ENCODE measurements at regions of chr4 and their contacts with region 1.

Region 1: DNA sequence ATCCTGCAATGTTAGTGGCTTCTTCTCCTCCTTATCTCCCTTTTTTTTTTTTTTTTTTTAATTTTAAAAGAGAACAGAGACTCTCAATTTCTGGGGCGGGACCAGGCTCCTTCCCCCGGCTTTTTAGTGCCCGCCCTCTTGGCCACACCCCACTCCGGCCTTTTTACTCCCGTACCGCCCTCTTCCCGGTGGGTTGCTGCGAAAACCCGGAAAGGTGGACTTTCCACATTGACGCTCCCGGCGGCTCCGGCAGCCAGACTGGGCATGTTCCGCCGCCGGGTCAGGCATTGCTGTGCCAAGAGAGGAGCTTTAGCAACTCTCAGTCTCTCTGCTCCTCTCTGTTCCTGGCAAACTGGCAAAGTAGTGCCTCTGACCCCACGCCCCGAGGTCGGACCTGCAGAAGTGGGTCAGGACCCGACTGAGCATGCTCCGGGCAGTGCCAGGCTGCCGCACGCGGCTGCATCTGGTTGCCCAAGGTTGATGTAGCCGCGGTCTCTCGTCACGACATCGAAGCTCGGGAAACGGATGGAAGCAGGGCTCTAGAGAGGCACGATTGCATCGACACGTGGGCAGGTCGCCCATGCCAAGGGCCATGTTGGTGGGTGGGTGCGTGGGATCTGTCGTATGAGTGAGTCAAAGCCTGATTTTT is 1.1 kb upstream of the MFAP3L start:
- DNase-seq: peak; percentile 96
- H3K4me3 ChIP-seq: peak overlapping the region; percentile 69 to 98 (median 78)
- H3K27ac ChIP-seq: peak overlapping the region; percentile 77
- H3K4me1 ChIP-seq: peaks cover 14% of the 10 kb centered on the region
- H3K27me3 ChIP-seq: no peaks in the 10 kb centered on the region
- CTCF ChIP-seq: no peak

Region 2: GRCh38 chr4:169619959-169620879 is 407.1 kb before region 1 on chr4 and contains the start of gene CLCN3:
- CTCF ChIA-PET with region 1: interaction called, 3 read pairs
- dilution Hi-C with region 1: no loop called
- in situ Hi-C with region 1: loop called (anchors 25 kb)
- intact Hi-C with region 1: no loop called
- DNase-seq: peak; percentile 99
- H3K4me3 ChIP-seq: peak within 1 kb of the TSS; percentile 77 to 98 (median 83)
- H3K27ac ChIP-seq: peak within 1 kb of the TSS; percentile 99
- H3K4me1 ChIP-seq: peaks cover 13% of the 10 kb centered on the region
- H3K27me3 ChIP-seq: no peaks in the 10 kb centered on the region
- CTCF ChIP-seq: peak in 1 of 2 donors; percentile 16
- total RNA-seq, gene CLCN3: 29.4 to 30.2 TPM

Region 3: DNA sequence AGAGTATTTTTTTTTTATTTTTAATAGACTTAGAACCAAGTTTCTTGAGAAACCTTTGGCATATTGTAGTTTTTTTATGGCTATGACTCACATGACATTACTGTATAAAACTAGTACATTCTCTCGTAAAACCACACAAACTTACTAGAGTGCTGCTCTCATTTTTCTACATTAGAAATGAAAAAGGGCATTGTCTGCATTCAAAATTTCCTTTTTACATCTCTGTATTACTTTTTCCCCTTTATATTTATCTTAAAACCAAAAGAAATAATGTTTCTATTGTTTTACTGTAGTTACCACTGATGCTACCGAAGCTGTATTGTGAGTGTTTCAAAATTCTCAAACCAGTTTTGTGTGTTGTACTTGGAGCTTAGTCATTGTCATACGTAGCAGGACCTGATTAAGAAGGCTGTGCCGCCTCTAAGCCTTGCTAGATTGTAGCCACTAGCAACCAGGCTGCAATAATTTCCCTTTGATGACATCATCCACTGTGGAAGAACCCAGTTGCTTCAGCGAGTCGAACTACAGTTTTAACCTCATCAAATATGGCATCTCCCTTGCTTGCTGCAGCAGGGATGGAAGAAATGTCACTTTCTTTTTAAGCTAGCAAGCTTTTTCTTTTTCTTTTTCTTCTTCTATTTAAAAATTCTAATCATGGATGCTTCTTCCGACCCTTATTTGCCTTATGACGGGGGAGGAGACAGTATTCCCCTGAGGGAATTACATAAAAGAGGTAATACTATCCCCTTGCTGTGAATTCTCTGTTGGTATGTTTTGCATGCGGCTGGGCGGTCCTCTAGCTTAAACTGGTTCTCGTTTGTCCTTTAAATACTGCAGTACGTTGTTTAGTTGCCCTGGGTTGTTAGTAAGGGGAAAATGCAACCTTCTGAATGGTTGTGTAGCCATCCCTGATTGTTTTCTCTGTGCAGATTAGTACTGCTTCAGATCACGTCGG is 367.3 kb before region 1 on chr4:
- CTCF ChIA-PET with region 1: no interaction called
- dilution Hi-C with region 1: no loop called
- in situ Hi-C with region 1: no loop called
- intact Hi-C with region 1: loop called (anchors 2 kb)
- DNase-seq: peak; percentile 98
- H3K4me3 ChIP-seq: peak overlapping the region; percentile 50 to 73 (median 69)
- H3K27ac ChIP-seq: peak overlapping the region; percentile 99
- H3K4me1 ChIP-seq: peaks cover 13% of the 10 kb centered on the region
- H3K27me3 ChIP-seq: no peaks in the 10 kb centered on the region
- CTCF ChIP-seq: no peak

Region 4: GRCh38 chr4:169802873-169803272 is 224.4 kb before region 1 on chr4:
- CTCF ChIA-PET with region 1: no interaction called
- dilution Hi-C with region 1: no loop called
- in situ Hi-C with region 1: loop called in 1 of 2 experiments (anchors 10 kb)
- intact Hi-C with region 1: no loop called
- DNase-seq: no peak
- H3K4me3 ChIP-seq: no peak overlapping the region
- H3K27ac ChIP-seq: no peak overlapping the region
- H3K4me1 ChIP-seq: no peaks in the 10 kb centered on the region
- H3K27me3 ChIP-seq: no peaks in the 10 kb centered on the region
- CTCF ChIP-seq: no peak

Region 5: DNA sequence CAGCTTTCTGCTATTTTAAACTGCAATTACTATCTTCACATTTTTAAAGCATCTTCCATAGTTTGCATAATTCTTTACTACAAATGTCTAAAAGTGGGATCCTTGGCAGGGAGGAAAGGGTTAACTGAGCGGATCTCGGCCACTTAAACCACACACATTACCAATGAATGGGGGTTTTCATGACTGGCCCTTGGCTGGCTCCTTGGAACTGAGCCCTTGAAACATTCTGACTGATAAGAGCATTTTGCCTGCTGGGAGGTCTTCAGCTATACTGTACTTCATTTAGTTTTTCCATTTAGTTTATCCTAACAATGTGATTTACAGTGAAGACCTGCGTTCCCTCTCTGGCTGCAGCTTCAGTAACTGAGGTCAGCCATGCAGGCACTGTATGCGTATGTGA is 30.6 kb after region 1 on chr4:
- CTCF ChIA-PET with region 1: no interaction called
- dilution Hi-C with region 1: no loop called
- in situ Hi-C with region 1: no loop called
- intact Hi-C with region 1: no loop called
- DNase-seq: no peak
- H3K4me3 ChIP-seq: no peak overlapping the region
- H3K27ac ChIP-seq: no peak overlapping the region
- H3K4me1 ChIP-seq: no peaks in the 10 kb centered on the region
- H3K27me3 ChIP-seq: no peaks in the 10 kb centered on the region
- CTCF ChIP-seq: no peak